Posterior vena cava (tissue), 2 donors: ENCODE measurements at regions of chr15 and their contacts with region 1.

Region 1: DNA sequence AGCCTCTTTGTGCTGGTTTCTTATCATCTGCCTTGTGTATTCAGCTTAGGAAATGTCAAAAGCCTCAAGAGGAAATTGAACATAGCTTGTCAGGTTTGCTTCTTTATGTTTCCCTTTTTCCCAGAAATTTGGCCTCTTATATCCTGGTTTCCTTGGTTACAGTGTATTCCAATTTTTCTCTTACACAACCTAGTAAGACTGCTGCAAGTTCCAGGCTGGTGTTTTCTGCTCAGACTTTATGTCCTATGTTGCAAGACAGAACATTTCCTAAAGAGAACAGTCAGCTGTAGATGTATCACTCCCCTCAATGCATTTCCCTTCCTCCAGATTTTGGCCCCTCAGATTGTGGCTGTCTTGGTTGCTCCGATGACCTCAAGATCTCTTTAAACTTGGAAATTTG is 102.5 kb downstream of the SH3GL3 start:
- DNase-seq: no peak

Region 2: DNA sequence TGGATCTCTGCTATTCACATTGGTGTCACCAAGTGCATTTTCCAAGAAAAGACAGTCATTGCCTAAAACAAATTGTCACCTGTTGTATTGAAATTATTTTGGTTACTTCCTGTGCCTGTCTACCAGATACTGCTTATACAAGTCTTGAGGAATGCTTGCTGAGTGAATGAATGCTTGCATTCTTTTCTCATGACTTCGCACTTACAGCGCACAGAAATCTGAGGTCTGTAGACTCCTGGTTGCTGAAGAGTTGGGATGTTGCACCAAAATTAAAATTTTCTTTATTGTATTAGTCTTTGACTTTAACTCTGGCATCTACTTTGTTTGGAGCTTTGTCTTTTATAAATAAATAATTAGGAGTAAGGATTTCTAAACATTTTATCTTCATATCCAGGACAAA is 74.1 kb before region 1 on chr15:
- intact Hi-C with region 1: loop called in 1 of 2 experiments (anchors 2 kb)
- DNase-seq: no peak